ENCODE measurements at regions of chr5 and their contacts with region 1.

Region 1: DNA sequence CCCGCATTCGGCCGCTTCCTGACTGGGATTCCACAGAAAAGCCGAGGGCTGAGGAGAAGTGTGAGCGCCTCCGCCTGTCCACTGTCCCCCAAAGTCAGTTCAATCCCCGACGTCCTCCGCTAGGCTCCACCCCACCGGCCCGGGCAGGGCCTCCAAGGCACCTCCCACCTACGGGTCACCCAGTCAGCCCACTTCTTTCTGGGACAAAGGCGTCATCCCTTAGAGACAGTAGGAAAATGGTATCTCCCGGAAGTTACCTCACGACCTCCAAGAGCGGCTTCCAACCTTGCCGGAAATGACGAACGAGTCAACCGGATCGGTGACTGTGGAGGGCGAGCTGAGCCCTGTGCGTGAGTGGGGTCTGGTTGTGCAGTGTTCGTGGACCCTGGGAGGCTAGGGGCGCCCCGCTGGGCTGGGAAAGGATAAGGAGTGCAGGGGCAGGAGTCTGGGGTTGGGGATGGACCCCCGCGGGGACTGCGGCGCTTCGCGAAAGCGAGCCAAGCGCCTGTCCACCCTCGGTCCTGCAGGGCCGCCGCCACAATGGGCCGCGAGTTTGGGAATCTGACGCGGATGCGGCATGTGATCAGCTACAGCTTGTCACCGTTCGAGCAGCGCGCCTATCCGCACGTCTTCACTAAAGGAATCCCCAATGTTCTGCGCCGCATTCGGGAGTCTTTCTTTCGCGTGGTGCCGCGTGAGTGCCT is at the starts of genes GDF9 and UQCRQ:
- DNase-seq: peak; percentile 98
- ATAC-seq: peak; percentile 99
- H3K4me3 ChIP-seq: peak within 1 kb of the TSS; percentile 85
- H3K27ac ChIP-seq: peak within 1 kb of the TSS; percentile 78
- H3K4me1 ChIP-seq: peaks cover 3% of the 10 kb centered on the region
- H3K27me3 ChIP-seq: no peaks in the 10 kb centered on the region
- CTCF ChIP-seq: peak; percentile 10 to 48 (median 18); a peak in 3 of 6 replicates
- EP300 ChIP-seq: no peak
- POLR2A ChIP-seq: peak; percentile 99
- RAD21 ChIP-seq: no peak
- polyA plus RNA-seq, gene GDF9: 0.11 to 0.24 TPM
- polyA plus RNA-seq, gene UQCRQ: 1,403 to 1,579 TPM

Region 2: DNA sequence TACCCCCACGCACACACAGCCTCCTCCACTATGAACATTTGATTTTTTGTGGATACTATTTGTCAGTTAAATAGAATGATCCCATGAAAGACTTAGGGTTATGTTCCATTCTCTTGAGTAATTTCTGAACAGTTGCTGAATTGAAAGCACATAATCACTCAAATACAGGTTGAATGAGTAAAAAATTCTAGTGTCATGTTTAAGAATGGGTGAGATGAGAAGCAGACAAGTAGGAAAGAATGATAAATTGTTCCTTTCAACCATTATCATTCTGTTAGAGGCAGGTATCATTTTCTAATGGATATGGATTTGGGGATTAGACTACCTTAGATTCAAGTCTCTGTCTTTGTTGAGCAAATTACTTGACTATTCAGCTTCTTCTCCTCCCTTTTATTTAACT is 290.4 kb before region 1 on chr5:
- CTCF ChIA-PET with region 1: no interaction called
- POLR2A ChIA-PET with region 1: no interaction called
- RAD21 ChIA-PET with region 1: no interaction called
- SMC1A ChIA-PET with region 1: no interaction called
- in situ Hi-C with region 1: no loop called
- intact Hi-C with region 1: no loop called
- DNase-seq: no peak
- ATAC-seq: no peak
- H3K4me3 ChIP-seq: no peak overlapping the region
- H3K27ac ChIP-seq: no peak overlapping the region
- H3K4me1 ChIP-seq: no peaks in the 10 kb centered on the region
- H3K27me3 ChIP-seq: no peaks in the 10 kb centered on the region
- CTCF ChIP-seq: no peak
- EP300 ChIP-seq: no peak
- POLR2A ChIP-seq: no peak
- RAD21 ChIP-seq: no peak

Region 3: DNA sequence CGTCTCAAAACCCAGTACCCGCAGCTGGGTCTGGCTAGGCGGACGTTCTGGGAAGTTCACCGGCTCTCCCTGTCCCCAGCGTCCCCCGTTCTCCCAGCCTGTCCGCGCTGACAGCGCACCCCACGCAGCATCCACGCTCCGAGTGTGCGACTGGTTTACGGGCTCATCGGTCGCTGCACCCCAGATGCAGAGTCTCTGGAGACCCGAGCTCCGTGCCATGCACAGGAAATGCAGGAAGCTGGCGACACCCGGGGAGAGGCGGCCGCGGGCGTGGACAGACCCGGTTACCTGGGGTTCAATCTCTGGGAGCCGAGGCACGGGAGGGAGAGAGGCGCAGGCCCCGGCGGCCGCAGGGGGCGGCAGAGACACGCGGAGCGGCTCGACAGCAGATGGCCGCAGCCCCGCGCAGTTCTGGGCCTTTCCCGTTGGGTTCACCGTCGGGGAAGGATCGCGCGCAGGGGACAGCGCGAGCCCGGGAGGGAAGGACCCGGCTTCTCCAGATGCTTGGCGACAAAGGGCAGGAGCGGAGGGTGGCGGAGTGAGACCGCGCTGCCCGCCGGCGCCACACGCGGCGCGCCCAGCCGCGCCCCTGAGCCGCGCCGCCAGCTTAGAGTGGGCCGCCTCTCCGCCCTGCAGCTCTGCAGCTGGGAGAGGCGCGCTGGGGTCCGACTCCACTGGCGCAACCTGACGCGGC is 36.6 kb before region 1 on chr5:
- CTCF ChIA-PET with region 1: interaction called, 46 read pairs
- POLR2A ChIA-PET with region 1: interaction called, 3 read pairs
- RAD21 ChIA-PET with region 1: interaction called, 4 read pairs
- SMC1A ChIA-PET with region 1: interaction called, 7 read pairs
- in situ Hi-C with region 1: no loop called
- intact Hi-C with region 1: loop called (anchors 2 kb)
- DNase-seq: no peak
- ATAC-seq: peak; percentile 90
- H3K4me3 ChIP-seq: peak overlapping the region; percentile 59
- H3K27ac ChIP-seq: peak overlapping the region; percentile 18; the same call in 1 of the 2 replicates
- H3K4me1 ChIP-seq: no peaks in the 10 kb centered on the region; the same call in 1 of the 2 replicates
- H3K27me3 ChIP-seq: peaks cover 0 to 2% of the 10 kb centered on the region in 2 experiments; a peak in 2 of 4 replicates
- CTCF ChIP-seq: peak; percentile 84 to 94 (median 89)
- EP300 ChIP-seq: 0 out of 4 replicates have a peak, but pooled peaks of 1 of the 2 experiments have one; percentile 9
- POLR2A ChIP-seq: peak; percentile 67
- RAD21 ChIP-seq: peak; percentile 73

Region 4: DNA sequence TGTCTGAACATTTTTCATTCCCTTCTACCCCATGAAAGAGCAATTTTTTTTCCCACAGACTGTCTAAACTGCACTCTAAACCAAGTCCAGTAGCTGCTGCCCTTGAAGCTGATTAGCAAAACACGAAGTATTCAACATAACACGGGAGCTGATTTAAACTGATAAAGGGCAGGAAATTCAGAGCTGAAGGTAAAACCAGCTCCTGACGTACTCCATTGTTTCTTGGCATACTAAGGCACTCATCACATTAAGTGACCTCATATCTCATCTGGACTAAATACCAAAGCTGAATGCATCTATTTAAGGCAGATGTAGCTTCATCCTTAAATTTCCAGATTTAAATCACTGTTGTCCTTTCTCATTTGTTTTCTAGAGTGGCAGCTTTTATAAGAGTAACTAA is 12.2 kb before region 1 on chr5:
- CTCF ChIA-PET with region 1: interaction called, 15 read pairs
- POLR2A ChIA-PET with region 1: interaction called, 6 read pairs
- RAD21 ChIA-PET with region 1: no interaction called
- SMC1A ChIA-PET with region 1: interaction called, 5 read pairs
- in situ Hi-C with region 1: no loop called
- intact Hi-C with region 1: no loop called
- DNase-seq: no peak
- ATAC-seq: no peak
- H3K4me3 ChIP-seq: no peak overlapping the region
- H3K27ac ChIP-seq: no peak overlapping the region
- H3K4me1 ChIP-seq: no peaks in the 10 kb centered on the region
- H3K27me3 ChIP-seq: no peaks in the 10 kb centered on the region
- CTCF ChIP-seq: no peak
- EP300 ChIP-seq: no peak
- POLR2A ChIP-seq: no peak
- RAD21 ChIP-seq: no peak

Region 5: GRCh38 chr5:133196441-133197085 is 330.1 kb after region 1 on chr5:
- CTCF ChIA-PET with region 1: no interaction called
- POLR2A ChIA-PET with region 1: no interaction called
- RAD21 ChIA-PET with region 1: no interaction called
- SMC1A ChIA-PET with region 1: no interaction called
- in situ Hi-C with region 1: no loop called
- intact Hi-C with region 1: no loop called
- DNase-seq: no peak
- ATAC-seq: no peak
- H3K4me3 ChIP-seq: no peak overlapping the region
- H3K27ac ChIP-seq: no peak overlapping the region
- H3K4me1 ChIP-seq: no peaks in the 10 kb centered on the region
- H3K27me3 ChIP-seq: no peaks in the 10 kb centered on the region; a peak in 2 of 4 replicates
- CTCF ChIP-seq: no peak
- EP300 ChIP-seq: no peak
- POLR2A ChIP-seq: no peak
- RAD21 ChIP-seq: no peak

Measured in GM12878 (cell line).